WTC11 (cell line): ENCODE measurements at regions of chr15 and their contacts with region 1.

Region 1: GRCh38 chr15:35289024-35289617 is 204.0 kb upstream of the NANOGP8 start:
- DNase-seq: no peak
- ATAC-seq: peak; percentile 87
- H3K4me3 Mint-ChIP-seq: no peak overlapping the region
- H3K27ac Mint-ChIP-seq: no peak overlapping the region
- H3K4me1 Mint-ChIP-seq: peaks cover 43% of the 10 kb centered on the region
- H3K27me3 Mint-ChIP-seq: no peaks in the 10 kb centered on the region
- CTCF ChIP-seq: peak; percentile 57

Region 2: GRCh38 chr15:35078221-35078915 is 210.8 kb before region 1 on chr15:
- CTCF ChIA-PET with region 1: interaction called, 24 read pairs
- POLR2A ChIA-PET with region 1: no interaction called
- DNase-seq: peak; percentile 42
- ATAC-seq: peak; percentile 90
- H3K4me3 Mint-ChIP-seq: no peak overlapping the region
- H3K27ac Mint-ChIP-seq: peak overlapping the region; percentile 56
- H3K4me1 Mint-ChIP-seq: peaks cover 15% of the 10 kb centered on the region
- H3K27me3 Mint-ChIP-seq: peaks cover 4% of the 10 kb centered on the region; the same call in 1 of the 2 replicates
- CTCF ChIP-seq: peak; percentile 80

Region 3: GRCh38 chr15:35301088-35301487 is 12.0 kb after region 1 on chr15:
- CTCF ChIA-PET with region 1: interaction called, 12 read pairs
- POLR2A ChIA-PET with region 1: no interaction called
- DNase-seq: no peak
- ATAC-seq: no peak
- H3K4me3 Mint-ChIP-seq: no peak overlapping the region
- H3K27ac Mint-ChIP-seq: no peak overlapping the region
- H3K4me1 Mint-ChIP-seq: peaks cover 5% of the 10 kb centered on the region; the same call in 1 of the 2 replicates
- H3K27me3 Mint-ChIP-seq: no peaks in the 10 kb centered on the region
- CTCF ChIP-seq: no peak

Region 4: GRCh38 chr15:35444557-35445204 is 155.6 kb after region 1 on chr15:
- CTCF ChIA-PET with region 1: interaction called, 159 read pairs
- POLR2A ChIA-PET with region 1: interaction called, 5 read pairs
- DNase-seq: no peak
- ATAC-seq: peak; percentile 52
- H3K4me3 Mint-ChIP-seq: no peak overlapping the region
- H3K27ac Mint-ChIP-seq: peak overlapping the region; percentile 65; the same call in 1 of the 2 replicates
- H3K4me1 Mint-ChIP-seq: peaks cover 34% of the 10 kb centered on the region
- H3K27me3 Mint-ChIP-seq: no peaks in the 10 kb centered on the region
- CTCF ChIP-seq: peak; percentile 76

Region 5: DNA sequence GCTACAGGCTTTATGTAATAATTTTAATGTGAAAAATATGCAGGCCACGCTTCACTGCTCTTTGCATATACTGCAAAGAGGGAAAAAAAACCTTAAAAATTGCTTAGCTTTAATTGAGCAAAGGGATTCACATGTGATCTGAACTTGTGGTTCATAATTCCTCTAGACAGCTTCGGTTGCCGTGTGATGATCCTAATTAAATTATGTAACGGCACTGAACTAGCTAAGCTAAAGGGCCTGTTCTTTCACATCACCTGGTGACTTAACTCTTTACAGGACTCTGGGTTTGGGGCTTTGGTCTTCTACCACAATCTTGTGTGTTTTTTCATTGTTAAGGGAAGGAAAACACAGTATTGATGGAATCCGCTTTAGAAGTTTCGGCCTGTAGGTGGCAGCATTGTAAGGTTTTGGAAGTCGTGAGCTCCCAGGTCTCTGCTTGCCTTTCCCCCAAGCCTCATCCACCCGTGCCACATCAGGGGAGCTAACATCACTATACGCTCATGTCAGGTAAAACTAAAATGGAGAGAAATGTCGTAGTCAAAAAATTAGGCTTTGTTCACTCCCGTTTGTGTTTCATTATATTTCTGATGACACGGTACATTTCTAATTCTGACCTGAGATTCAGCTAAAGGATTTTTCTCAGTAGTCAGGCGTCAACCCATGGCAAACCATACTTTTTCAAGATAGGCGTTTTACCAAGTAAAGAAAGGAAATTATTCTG is 462.5 kb after region 1 on chr15:
- CTCF ChIA-PET with region 1: interaction called, 11 read pairs
- POLR2A ChIA-PET with region 1: no interaction called
- DNase-seq: peak; percentile 80
- ATAC-seq: peak; percentile 91
- H3K4me3 Mint-ChIP-seq: peak overlapping the region; percentile 47
- H3K27ac Mint-ChIP-seq: no peak overlapping the region
- H3K4me1 Mint-ChIP-seq: peaks cover 29% of the 10 kb centered on the region
- H3K27me3 Mint-ChIP-seq: no peaks in the 10 kb centered on the region
- CTCF ChIP-seq: peak; percentile 66